K562 (cell line): ENCODE measurements at regions of chr5 and their contacts with region 1.

Region 1: GRCh38 chr5:74640450-74640953 is at the start of gene ENC1:
- DNase-seq: peak; percentile 55 to 82 (median 58)
- ATAC-seq: peak; percentile 94
- H3K4me3 ChIP-seq: peak within 1 kb of the TSS; percentile 36
- H3K27ac ChIP-seq: no peak within 1 kb of the TSS; the same call in 2 of the 3 replicates
- H3K4me1 ChIP-seq: peaks cover 9 to 19% of the 10 kb centered on the region in 2 experiments; a peak in 3 of 5 replicates
- H3K27me3 ChIP-seq: peaks cover 15 to 48% of the 10 kb centered on the region in 2 experiments; a peak in 4 of 5 replicates
- CTCF ChIP-seq: peak; percentile 26 to 82 (median 46); a peak in 4 of 6 replicates
- EP300 ChIP-seq: no peak
- POLR2A ChIP-seq: no peak
- RAD21 ChIP-seq: peak; percentile 53 to 63
- polyA plus RNA-seq, gene ENC1: 0.17 to 0.37 TPM

Region 2: DNA sequence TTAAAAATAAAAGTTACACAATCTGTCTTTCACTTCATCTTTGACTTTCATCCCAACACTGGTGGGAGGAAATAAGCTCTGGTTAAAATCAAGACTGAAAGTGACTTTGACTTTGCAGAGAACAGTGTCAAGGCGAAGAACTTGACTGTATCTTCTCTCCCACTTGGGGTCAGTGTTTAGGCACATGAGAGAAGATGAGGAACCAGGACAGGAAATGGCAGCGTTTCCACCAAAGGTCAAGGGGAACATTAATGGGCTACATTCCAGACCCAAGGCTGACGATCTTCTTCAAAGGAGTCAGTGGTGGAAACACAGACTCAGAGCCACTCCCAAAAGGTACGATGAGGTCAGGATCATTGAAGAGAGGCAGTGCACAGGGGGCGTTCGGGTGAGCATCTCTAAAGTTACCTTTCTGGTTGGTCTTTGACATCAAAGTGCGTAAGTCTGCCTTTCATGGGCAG is 605.0 kb before region 1 on chr5:
- CTCF ChIA-PET with region 1: no interaction called
- POLR2A ChIA-PET with region 1: no interaction called
- in situ Hi-C with region 1: loop called (anchors 25 kb)
- intact Hi-C with region 1: loop called (anchors 5 kb)
- DNase-seq: peak in 2 of 4 experiments; percentile 8 to 25
- ATAC-seq: peak; percentile 55
- H3K4me3 ChIP-seq: no peak overlapping the region
- H3K27ac ChIP-seq: no peak overlapping the region
- H3K4me1 ChIP-seq: no peaks in the 10 kb centered on the region
- H3K27me3 ChIP-seq: no peaks in the 10 kb centered on the region
- CTCF ChIP-seq: peak; percentile 10 to 49 (median 23); a peak in 2 of 6 replicates
- EP300 ChIP-seq: no peak
- POLR2A ChIP-seq: no peak
- RAD21 ChIP-seq: peak; percentile 70 to 75

Region 3: GRCh38 chr5:74212336-74212735 is 428.2 kb before region 1 on chr5:
- CTCF ChIA-PET with region 1: no interaction called
- POLR2A ChIA-PET with region 1: no interaction called
- in situ Hi-C with region 1: no loop called
- intact Hi-C with region 1: loop called (anchors 5 kb)
- DNase-seq: peak; percentile 19 to 40 (median 23)
- ATAC-seq: peak; percentile 76
- H3K4me3 ChIP-seq: no peak overlapping the region
- H3K27ac ChIP-seq: no peak overlapping the region
- H3K4me1 ChIP-seq: no peaks in the 10 kb centered on the region
- H3K27me3 ChIP-seq: peaks cover 0 to 8% of the 10 kb centered on the region in 2 experiments; a peak in 3 of 5 replicates
- CTCF ChIP-seq: peak; percentile 46 to 53 (median 52)
- EP300 ChIP-seq: no peak
- POLR2A ChIP-seq: no peak
- RAD21 ChIP-seq: peak; percentile 40 to 66

Region 4: DNA sequence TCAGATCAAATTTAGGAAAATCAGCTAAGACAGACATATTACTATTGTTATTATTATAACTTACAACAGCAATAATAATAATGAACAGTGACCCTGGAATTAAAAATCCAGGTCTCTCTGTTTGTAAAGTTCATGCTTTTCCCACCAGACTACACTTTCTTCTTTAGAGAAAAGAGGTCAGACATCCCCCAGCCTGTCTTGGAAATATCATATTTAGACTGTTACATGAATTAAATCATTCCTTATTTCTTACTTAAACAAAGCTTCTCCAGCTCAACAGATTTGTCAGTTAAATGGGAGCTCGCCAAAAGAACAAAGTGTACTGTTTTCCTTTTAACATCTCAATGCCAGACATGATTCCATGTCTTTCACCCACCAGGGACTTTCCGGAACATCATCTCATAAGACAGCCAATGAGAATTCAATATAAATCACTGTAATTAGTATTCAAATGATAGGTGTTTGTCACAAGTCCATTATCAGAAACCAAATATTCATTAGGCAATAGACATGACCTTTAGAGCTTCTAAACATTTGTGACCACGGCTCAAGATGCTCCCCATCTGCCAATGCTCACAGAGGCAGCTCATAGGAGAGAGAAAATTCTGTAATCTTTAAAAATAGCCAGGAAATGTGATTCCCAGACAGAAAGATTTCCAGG is 351.9 kb before region 1 on chr5:
- CTCF ChIA-PET with region 1: no interaction called
- POLR2A ChIA-PET with region 1: no interaction called
- in situ Hi-C with region 1: no loop called
- intact Hi-C with region 1: no loop called
- DNase-seq: no peak
- ATAC-seq: no peak
- H3K4me3 ChIP-seq: no peak overlapping the region
- H3K27ac ChIP-seq: no peak overlapping the region
- H3K4me1 ChIP-seq: no peaks in the 10 kb centered on the region
- H3K27me3 ChIP-seq: no peaks in the 10 kb centered on the region
- CTCF ChIP-seq: no peak
- EP300 ChIP-seq: no peak
- POLR2A ChIP-seq: no peak
- RAD21 ChIP-seq: no peak

Region 5: GRCh38 chr5:74394916-74395781 is 245.4 kb before region 1 on chr5:
- CTCF ChIA-PET with region 1: no interaction called
- POLR2A ChIA-PET with region 1: no interaction called
- in situ Hi-C with region 1: no loop called
- intact Hi-C with region 1: loop called (anchors 5 kb)
- DNase-seq: no peak
- ATAC-seq: no peak
- H3K4me3 ChIP-seq: no peak overlapping the region
- H3K27ac ChIP-seq: no peak overlapping the region
- H3K4me1 ChIP-seq: peaks cover 0 to 8% of the 10 kb centered on the region in 2 experiments; a peak in 3 of 5 replicates
- H3K27me3 ChIP-seq: no peaks in the 10 kb centered on the region
- CTCF ChIP-seq: peak in 2 of 3 experiments; percentile 9 to 10; a peak in 1 of 6 replicates
- EP300 ChIP-seq: no peak
- POLR2A ChIP-seq: no peak
- RAD21 ChIP-seq: peak in 1 of 2 experiments; percentile 42; a peak in 2 of 4 replicates